MCF 10A (cell line): ENCODE measurements at regions of chr5 and their contacts with region 1.

Region 1: DNA sequence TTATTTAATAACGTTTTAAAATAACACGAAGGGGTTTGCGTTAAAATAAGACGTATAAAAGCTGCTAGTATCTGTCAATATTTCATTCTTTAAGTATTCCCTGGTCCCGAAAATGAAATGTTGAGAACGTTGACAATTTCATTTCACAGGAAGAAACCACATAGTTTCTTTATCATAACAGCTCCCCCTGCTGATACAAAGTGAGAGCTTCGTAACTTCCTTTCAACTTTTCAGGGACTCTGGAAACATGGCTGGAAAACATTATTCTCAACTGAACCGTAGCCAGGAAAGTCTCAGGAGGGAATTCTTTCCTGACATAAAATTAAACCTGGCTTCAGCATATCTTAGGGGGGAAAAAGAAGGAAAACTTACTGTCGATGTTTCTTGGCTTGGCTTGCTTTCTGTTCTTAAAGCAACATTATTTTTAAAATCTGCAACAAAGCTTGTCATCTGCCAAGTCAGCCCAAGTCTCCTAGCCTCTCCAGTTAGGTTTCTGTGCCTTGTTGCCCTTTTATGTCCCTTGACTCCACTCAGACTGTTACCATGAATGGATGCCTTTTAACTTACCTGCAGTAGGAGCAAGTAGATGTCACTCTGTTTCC is 122.9 kb upstream of the DAB2 start:
- DNase-seq: peak; percentile 73
- H3K4me3 Mint-ChIP-seq: no peak overlapping the region
- H3K27ac Mint-ChIP-seq: no peak overlapping the region
- H3K4me1 Mint-ChIP-seq: no peaks in the 10 kb centered on the region
- H3K27me3 Mint-ChIP-seq: no peaks in the 10 kb centered on the region
- CTCF ChIP-seq: peak; percentile 65

Region 2: DNA sequence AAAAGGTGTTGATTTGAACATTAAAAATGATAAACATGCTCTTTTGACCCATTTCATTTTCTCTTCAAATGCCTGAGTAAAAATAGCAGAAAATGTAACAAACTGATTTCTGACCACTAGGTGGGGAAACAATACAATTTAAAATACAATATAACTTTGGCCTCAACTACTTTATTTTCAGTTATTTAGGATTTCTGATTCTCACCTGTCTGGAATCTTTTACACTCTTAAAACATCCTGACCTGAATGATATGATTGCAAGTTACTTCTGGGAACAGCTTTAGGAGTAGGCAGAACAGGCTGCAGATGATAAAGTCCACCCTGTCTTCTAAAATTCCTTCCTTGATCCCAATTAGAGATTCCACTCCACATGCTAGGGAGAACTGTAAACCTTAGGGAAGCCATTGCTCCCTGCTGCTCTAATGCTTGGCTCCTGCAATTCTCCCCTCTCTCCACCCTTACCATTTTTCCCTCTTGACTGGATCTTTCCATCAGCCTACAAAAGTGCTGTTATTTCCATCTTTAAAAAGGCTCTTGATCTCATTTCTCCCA is 398.6 kb before region 1 on chr5:
- CTCF ChIA-PET with region 1: interaction called, 3 read pairs
- POLR2A ChIA-PET with region 1: no interaction called
- intact Hi-C with region 1: loop called (anchors 2 kb)
- DNase-seq: peak; percentile 29
- H3K4me3 Mint-ChIP-seq: no peak overlapping the region
- H3K27ac Mint-ChIP-seq: no peak overlapping the region
- H3K4me1 Mint-ChIP-seq: no peaks in the 10 kb centered on the region
- H3K27me3 Mint-ChIP-seq: no peaks in the 10 kb centered on the region
- CTCF ChIP-seq: peak; percentile 49

Region 3: GRCh38 chr5:39384271-39384670 is 163.4 kb before region 1 on chr5:
- CTCF ChIA-PET with region 1: interaction called, 355 read pairs
- POLR2A ChIA-PET with region 1: interaction called, 3 read pairs
- intact Hi-C with region 1: no loop called
- DNase-seq: no peak
- H3K4me3 Mint-ChIP-seq: no peak overlapping the region
- H3K27ac Mint-ChIP-seq: no peak overlapping the region
- H3K4me1 Mint-ChIP-seq: no peaks in the 10 kb centered on the region
- H3K27me3 Mint-ChIP-seq: no peaks in the 10 kb centered on the region
- CTCF ChIP-seq: no peak

Region 4: GRCh38 chr5:39424736-39425637 is 122.7 kb before region 1 on chr5 and contains the start of gene DAB2:
- CTCF ChIA-PET with region 1: interaction called, 15 read pairs
- POLR2A ChIA-PET with region 1: no interaction called
- intact Hi-C with region 1: no loop called
- DNase-seq: peak; percentile 62
- H3K4me3 Mint-ChIP-seq: peak within 1 kb of the TSS; percentile 81
- H3K27ac Mint-ChIP-seq: no peak within 1 kb of the TSS
- H3K4me1 Mint-ChIP-seq: peaks cover 5% of the 10 kb centered on the region
- H3K27me3 Mint-ChIP-seq: peaks cover 18% of the 10 kb centered on the region
- CTCF ChIP-seq: peak; percentile 23
- total RNA-seq, gene DAB2: 0.68 and 2.1 TPM in 2 replicates

Region 5: GRCh38 chr5:39570403-39571027 is 22.9 kb after region 1 on chr5:
- CTCF ChIA-PET with region 1: interaction called, 15 read pairs
- POLR2A ChIA-PET with region 1: no interaction called
- intact Hi-C with region 1: no loop called
- DNase-seq: peak; percentile 44
- H3K4me3 Mint-ChIP-seq: no peak overlapping the region
- H3K27ac Mint-ChIP-seq: no peak overlapping the region
- H3K4me1 Mint-ChIP-seq: no peaks in the 10 kb centered on the region
- H3K27me3 Mint-ChIP-seq: no peaks in the 10 kb centered on the region
- CTCF ChIP-seq: peak; percentile 64

Region 6: DNA sequence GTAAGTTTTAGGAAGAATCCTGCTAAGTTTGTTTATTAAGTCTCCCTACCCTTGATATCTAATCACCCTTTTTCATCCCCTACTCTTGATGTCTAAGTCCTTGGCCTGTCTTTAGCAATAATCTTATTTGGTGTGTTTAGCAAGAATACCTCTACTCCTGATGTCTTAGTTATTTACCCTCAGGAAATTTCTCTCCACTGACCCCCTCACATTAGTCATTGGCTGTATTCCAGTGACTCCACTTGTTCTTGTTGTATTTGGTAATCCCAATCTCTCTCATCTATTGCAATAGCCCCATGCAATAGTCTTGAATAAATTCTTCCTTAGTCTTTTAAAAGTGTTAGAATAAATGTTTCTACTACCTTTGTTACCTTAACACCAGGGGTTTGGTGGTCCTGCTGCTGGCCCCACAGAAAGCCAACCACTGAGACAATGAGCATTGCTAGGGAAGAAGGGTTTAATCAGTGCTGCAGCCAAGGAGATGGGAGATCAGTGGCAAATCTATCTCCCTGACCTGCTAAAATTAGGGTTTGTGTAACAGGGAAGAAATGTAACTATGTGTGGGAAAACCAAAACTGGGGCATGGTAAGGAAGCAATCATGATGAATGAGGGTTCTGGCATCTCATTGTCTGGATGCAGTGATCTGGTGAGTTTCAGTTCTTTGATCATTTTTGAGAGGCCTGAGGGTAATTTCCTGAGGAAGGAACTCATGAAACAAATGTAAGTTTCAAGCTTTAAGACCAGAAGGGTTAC is 113.5 kb after region 1 on chr5:
- CTCF ChIA-PET with region 1: no interaction called
- POLR2A ChIA-PET with region 1: no interaction called
- intact Hi-C with region 1: no loop called
- DNase-seq: peak; percentile 87
- H3K4me3 Mint-ChIP-seq: no peak overlapping the region
- H3K27ac Mint-ChIP-seq: no peak overlapping the region
- H3K4me1 Mint-ChIP-seq: peaks cover 20% of the 10 kb centered on the region
- H3K27me3 Mint-ChIP-seq: no peaks in the 10 kb centered on the region
- CTCF ChIP-seq: no peak

Region 7: GRCh38 chr5:39955156-39955555 is 407.5 kb after region 1 on chr5:
- CTCF ChIA-PET with region 1: no interaction called
- POLR2A ChIA-PET with region 1: no interaction called
- intact Hi-C with region 1: no loop called
- DNase-seq: no peak
- H3K4me3 Mint-ChIP-seq: no peak overlapping the region
- H3K27ac Mint-ChIP-seq: no peak overlapping the region
- H3K4me1 Mint-ChIP-seq: no peaks in the 10 kb centered on the region
- H3K27me3 Mint-ChIP-seq: no peaks in the 10 kb centered on the region
- CTCF ChIP-seq: no peak